Posterior vena cava (tissue), 2 donors: ENCODE measurements at regions of chr17 and their contacts with region 1.

Region 1: DNA sequence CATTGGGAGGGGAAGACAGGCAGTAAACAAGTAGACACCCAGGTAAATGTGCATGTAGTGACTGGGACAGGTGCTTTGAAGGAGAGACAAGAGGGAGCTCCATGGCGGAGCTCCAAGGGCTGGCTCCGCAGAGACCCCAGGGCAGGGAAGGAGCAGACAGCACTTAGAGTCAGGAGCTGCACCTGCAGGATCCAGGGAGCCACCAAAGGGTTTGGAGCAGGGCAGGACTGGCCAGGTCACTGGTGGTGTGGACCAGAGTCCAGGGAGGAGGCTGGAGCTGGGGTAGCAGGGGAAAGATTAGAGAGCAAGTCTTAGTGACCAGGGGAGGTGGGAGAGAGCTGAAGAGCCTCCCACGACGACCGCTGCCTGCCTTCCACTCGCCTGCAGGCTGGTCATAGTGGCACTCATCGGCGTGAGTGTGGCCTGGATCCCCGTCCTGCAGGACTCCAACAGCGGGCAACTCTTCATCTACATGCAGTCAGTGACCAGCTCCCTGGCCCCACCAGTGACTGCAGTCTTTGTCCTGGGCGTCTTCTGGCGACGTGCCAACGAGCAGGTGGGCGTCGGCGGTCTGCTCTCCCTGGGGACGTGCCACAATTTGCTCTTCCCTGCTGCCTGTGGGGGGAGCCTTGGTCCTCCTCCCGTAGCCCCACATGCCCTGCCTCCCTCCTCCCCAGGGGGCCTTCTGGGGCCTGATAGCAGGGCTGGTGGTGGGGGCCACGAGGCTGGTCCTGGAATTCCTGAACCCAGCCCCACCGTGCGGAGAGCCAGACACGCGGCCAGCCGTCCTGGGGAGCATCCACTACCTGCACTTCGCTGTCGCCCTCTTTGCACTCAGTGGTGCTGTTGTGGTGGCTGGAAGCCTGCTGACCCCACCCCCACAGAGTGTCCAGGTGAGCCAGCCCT is 14.7 kb upstream of the FAM83G start:
- DNase-seq: peak; percentile 79

Region 2: DNA sequence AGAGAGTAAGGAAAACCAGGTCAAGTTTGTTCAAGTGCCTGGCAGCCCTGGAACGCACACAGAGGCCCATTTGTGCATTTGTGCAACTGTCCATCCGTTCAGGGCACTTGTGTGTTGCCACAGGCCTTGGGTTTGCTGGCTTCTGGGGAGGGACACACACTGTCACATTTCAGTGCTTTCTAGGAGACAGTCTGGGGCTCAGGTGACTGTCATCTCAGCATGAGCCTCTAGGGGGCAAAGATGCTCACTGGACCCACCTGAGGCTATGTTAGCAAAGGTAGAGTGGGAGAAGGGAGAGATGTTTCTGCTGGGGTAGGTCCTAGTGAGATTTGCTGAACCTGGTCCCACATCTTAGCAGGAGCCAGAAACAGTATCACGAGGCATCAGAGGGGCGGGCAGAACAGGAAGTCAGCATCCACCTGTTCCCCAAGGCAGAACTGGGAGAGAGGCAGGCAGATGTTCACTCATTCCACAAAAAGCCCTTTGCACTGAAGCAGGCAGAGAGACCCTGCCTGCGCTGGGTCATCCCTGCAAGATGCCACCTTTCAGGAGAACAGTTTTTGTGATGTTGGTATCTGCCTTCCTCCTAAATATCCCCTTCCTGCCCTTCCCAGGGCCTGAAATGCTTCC is 1289.6 kb before region 1 on chr17:
- intact Hi-C with region 1: loop called in 1 of 2 experiments (anchors 10 kb)
- DNase-seq: no peak

Region 3: DNA sequence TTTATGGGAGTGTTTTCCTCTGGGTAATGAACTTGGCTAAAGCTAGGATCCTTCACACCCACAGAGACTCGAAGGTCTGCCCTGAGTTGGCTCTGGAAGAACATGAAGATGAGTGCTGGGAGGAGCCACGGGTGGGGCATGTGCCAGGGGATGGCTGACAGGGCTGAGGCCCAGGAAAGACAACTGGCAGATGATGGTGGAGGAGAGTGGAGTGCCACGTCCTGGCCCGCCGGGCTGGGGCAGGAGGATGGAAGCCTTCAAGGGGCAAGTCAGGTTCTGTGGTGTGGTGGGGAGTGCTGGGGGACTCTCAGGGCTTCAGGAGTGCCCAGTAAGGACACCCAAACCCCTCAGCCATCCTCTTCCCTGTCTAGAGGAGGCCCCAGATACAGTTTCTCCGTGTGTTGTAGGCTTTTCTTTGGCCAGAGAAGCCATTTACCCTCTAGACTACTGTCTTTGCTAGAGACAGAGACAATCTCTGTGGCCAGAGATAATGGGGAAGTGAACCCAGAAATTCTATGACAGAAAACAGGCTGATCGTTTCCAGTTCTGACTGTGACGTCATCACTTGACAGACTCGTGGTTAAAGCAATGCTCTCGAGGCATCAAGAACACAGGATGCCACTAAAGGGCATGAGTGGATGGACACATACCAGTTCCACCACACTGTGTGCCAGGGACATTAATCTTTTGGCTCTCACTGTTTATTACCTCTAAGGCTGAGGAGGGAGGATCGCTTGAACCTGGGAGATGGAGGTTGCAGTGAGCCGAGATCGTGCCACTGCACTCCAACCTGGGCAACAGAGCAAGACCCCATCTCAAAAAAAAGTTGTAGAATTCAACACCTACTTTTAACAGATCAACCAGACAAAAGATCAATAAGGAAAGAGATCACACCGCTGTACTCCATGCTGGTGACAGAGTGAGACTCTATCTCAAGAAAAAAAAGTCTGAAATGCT is 85.9 kb before region 1 on chr17:
- intact Hi-C with region 1: no loop called
- DNase-seq: no peak

Region 4: GRCh38 chr17:18966831-18967624 is 52.3 kb before region 1 on chr17:
- intact Hi-C with region 1: loop called in 1 of 2 experiments (anchors 5 kb)
- DNase-seq: no peak

Region 5: DNA sequence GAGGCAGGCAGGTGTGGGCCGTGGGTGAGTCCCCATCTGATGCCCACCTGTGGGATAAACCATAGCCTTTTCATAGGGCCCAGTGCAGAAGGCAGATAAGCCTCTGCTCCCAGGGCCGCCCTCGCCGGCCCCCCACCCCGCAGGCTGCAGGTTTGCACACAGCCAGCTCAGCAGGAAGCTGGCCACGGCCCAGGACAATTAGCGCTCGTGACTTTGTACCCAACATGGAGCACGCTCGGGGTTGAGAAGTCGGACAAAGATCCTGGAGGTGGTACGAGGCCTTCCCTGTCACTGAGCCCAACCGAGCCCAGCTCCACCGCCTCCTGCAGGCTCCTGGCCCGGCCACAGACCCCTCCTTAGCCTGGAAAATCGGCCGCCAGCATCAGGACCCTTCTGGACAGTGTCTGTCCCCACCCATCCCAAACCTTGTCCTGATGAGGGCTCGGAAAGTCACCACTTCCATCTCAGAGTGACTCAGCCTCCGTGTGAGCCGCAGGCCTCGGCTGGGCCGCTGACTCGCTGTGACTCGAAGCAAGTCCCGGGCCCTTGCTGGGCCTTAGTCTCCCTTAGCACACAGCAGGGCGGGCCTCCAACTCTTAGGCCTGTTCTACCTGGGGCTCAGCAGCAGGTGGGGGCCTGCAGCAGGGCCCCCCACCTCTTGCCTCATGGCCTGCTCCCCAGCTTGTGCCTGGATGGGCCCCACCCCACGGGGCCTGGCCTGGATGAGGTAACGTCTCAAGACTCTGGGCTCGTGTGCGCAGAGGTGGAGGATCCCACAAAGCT is 37.5 kb before region 1 on chr17:
- intact Hi-C with region 1: no loop called
- DNase-seq: no peak